GM18951 (cell line): ENCODE measurements at regions of chr9 and their contacts with region 1.

Region 1: GRCh38 chr9:99819856-99820684 is 1.6 kb upstream of the NR4A3 start:
- POLR2A ChIP-seq: no peak

Region 2: GRCh38 chr9:99650187-99650874 is 169.7 kb before region 1 on chr9:
- in situ Hi-C with region 1: no loop called
- POLR2A ChIP-seq: no peak

Region 3: DNA sequence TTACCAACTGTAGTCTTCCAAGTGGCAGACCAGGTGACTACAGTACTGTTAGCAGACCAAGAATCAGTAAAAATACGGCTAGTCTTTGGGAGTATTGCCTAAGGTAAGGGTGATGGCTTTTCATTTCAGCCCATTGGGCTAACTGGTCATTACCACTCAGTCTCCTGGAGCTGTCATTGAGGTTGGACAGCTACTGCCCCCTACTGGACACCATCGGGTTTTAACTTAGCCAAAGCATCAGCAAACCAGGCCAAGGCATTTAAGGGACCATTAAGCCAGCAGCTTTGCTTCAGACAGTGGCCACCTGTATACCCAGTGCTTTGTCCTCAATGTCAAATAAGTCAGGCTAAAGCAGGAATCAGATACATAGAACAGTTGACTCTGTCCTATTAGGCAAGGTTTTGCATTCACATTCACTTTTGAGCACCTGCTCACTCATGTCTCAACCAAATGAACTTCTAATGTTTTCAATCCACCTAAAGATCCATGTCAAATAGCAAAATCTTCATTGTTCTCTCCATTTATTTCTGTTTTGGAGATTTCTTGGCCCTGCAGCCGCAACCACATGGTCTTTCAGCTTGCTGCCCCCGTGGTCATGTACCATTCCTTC is 396.2 kb after region 1 on chr9:
- in situ Hi-C with region 1: loop called (anchors 25 kb)
- POLR2A ChIP-seq: no peak

Region 4: GRCh38 chr9:100890321-100890720 is 1070.3 kb after region 1 on chr9:
- in situ Hi-C with region 1: no loop called
- POLR2A ChIP-seq: no peak